ENCODE measurements at regions of chr6 and their contacts with region 1.

Region 1: DNA sequence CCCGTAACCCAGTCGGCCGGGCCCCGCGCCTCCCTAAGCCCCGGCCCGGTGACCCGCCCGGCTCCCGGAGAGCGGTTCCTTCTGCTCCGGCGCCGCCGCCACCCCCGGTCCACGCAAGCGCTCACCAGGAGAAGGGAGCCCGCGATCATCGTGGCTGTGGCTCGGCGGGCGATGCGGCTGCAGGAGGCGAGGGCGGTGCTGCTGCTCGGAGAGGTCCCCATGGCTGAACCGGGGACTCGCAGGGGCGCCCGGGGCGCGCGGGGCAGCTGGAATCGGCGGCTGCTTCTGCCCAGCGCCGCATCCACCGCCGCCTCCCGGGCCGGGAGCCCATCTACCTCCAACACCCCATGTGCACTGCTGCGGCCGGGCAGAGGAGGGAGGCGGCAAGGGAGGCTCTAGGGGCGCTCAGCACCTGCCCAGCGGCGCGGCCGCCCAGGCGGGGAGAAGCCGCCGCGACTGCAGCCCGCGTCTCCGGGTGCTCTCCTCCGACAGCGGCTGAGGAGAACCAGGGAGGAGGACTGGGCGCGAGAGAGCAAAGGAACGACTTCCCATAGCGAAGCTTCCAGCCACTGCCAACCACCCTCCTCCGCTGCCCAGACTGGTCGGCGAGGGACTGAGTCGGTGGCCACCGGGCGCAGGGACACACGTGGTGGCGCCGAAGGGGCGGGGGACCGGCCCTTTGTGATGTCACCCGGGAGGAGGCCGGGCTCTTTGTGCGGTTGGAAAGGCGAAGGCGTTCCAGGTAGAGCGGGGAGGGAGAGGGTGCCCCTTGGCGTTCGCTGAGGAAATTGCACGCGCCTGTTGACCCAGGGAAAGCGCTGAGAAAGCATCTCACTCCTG is at the start of gene TNFRSF21:
- DNase-seq: peak; percentile 92
- ATAC-seq: peak; percentile 98
- total RNA-seq, gene TNFRSF21: 15.3 TPM

Region 2: DNA sequence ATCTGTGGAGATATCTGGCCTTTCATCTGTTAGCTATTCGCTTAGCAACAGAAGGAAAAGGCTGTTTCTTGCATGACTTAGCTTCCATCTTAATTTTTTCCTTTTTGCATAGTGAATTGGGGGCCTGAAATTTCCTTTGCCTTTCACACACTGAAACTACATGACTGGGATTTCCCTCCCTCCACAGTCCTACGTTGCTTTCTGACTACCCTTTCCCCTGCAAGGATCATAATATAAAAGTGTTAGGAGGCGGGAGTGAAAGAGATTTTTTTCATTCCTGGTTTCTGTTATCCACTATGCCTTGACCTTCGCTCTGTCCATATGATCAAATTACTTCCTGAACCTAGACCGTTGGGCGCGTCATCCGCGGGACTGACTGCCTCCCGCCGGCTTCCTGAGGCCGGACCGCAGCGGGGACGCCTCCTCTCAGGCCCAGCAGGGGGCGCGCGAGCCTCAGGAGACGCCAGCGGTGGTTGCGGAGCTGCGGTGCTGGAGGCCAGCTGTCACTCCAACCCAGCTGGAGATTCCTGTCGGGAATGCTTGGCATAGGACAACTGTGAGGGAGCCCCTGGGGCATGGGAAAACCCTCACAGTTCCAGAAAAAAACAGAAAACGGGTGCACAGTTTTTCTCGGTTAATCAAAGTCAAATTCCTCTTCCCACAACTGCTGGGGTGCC is 460.7 kb before region 1 on chr6:
- intact Hi-C with region 1: loop called (anchors 5 kb)
- DNase-seq: peak; percentile 93
- ATAC-seq: peak; percentile 93

Region 3: DNA sequence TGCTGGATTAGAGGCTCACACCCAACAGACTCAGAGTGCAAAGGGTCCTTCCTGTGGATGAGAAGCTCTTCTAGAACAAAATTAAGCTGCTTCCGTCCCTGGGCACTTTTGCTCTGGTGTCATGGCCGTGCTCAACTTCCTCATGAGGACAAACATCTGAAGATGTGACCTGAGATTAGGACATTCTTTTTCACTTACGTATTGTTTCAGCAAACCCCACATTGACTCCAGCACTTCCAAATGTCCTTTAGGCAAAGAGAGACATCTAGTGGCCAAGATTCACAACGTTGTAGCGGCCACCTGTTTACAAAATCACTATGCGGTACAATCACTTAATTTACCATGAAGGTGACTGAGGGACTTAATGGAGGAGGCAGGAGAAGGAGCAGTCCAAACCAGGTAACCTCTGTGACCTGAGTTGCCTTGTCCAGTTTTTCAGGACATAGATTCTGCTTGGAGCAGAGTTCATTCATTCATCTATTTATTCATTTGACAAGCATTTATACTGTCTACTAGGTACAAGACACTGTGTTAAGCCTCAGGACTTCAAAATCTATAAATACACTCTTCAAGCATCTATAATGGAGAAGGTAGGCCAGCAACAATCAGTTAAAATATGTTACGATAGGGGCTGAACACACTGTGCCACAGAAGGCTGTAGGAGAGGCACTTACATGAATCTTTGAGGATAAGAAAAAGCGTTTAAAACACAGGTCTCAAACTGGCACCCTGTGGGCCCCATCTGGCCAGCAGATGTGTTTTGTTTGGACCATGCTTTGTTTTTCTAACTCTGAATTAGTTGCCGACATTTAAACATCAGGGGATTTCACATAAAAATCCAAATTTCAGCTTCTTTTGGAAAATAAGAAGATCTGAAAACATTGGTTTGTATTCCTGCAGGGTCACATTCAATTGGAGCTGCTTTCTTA is 261.8 kb before region 1 on chr6:
- intact Hi-C with region 1: loop called (anchors 2 kb)
- DNase-seq: no peak
- ATAC-seq: peak; percentile 83

Region 4: DNA sequence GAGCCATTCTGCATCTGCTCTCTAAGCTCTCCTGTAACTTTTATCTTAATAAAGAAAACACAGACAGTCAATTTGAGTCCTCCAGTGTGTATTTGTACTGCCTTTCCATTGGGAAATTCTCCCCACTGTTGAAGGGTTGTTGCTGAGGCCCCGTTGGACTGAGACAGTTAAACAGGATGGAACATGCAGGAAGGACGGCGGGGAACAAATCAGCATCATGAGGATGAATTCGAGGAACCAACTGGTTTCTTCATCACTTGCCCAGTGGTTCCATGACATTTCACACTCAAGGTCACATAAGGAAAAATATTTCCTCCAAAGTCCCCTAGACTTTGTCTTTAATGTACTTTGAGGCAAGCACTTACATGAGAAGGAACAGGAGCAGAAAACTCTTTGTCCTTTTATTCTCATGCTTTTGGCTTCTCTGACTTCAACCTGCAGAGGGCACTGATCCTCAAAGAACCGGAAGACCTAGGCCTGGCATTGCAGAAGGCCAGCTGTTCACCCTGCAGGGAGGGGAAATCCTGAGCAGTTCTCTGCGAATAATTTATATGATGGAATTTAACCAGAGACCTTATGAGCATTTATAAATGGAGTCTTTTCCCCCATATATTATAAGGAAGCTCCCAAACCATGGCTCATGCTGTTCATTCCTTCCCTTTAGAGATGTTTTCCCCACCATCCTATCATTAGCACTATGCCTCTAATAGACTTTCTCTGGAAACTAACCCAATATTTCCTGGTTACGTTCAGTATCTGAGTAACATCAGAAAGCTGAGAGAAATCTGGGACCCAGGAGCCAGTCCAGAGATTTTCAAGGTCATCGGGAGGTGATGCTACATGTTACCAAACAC is 212.2 kb before region 1 on chr6:
- intact Hi-C with region 1: loop called (anchors 1 kb)
- DNase-seq: no peak
- ATAC-seq: peak; percentile 72

Region 5: GRCh38 chr6:47168183-47168582 is 141.3 kb before region 1 on chr6:
- intact Hi-C with region 1: no loop called
- DNase-seq: peak; percentile 68
- ATAC-seq: peak; percentile 81

Region 6: GRCh38 chr6:47242483-47243386 is 66.8 kb before region 1 on chr6:
- intact Hi-C with region 1: loop called (anchors 5 kb)
- DNase-seq: peak; percentile 93
- ATAC-seq: peak; percentile 95

Measured in Right ventricle myocardium inferior (tissue), 1 donor.